Activated T-helper 1 cell treated with anti-CD3 and anti-CD28 coated beads, Interleukin-12 subunit alpha, Interleukin-12 subunit beta, Interleukin-2, Interleukin-4 antibody, amounts not matched to agents 30 ng/mL and 10 ng/mL and 1 ng/mL, durations not matched to agents 14 hours and 24 hours and 36 hours (primary cell): ENCODE measurements at regions of chr9 and their contacts with region 1.

Region 1: GRCh38 chr9:7536310-7536939 is 263.2 kb downstream of the DMAC1 start:
- DNase-seq: peak; percentile 31
- H3K4me3 Mint-ChIP-seq: no peak overlapping the region
- H3K27ac Mint-ChIP-seq: no peak overlapping the region
- H3K4me1 Mint-ChIP-seq: peaks cover 45% of the 10 kb centered on the region
- H3K27me3 Mint-ChIP-seq: peaks cover 4% of the 10 kb centered on the region

Region 2: DNA sequence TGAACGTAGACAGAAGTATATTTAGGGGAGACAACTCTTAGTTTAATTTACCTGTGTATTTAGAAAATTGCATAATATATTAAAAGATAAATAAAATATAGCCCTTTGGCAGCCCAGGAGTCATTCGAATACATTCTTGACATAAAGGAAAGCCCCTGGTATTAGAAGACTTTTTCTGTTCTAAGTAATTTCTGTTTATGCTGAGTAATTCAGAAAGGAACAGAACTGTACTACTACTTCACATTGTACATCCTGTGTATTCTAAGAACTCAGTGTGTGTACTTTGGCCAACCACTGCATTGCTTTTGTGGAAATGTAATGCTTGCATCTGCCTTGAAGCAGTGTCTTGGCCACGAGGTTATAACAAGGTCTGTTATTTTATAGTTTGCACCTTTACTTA is 642.3 kb before region 1 on chr9:
- intact Hi-C with region 1: loop called (anchors 1 kb)
- DNase-seq: no peak
- H3K4me3 Mint-ChIP-seq: peak overlapping the region; percentile 32
- H3K27ac Mint-ChIP-seq: peak overlapping the region; percentile 61
- H3K4me1 Mint-ChIP-seq: peaks cover 33% of the 10 kb centered on the region
- H3K27me3 Mint-ChIP-seq: no peaks in the 10 kb centered on the region

Region 3: DNA sequence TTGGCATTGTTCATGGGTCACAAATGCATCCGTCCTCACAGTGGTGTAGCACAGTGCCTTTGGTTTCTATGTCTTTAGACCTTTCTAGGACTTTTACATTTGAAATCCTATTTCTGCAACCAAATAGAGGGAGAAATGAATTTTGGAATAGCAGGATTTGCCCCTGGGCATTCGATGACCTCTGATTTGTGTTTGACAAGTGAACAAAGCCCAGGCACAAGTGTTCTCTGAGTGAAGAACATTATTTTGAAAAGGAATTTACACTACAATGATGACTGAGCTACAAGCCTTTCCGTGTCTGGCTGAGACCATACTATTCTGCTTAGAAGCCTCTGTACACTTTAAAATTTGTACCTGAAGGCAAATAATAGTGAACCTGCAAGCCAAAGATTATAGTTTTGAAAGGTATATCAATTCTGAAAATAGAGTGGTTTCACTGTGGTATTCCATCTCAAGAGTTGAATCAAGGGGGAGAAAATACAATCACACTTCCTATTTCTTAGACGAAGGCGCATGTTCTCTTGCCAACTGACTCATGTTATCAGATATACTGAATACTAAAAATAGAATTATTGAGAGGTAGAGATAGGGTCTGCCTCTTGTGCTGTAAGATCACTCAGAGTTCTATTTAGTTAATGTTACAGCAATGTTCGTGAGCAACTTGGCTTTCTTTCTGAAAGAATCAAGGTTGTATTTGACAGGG is 481.1 kb before region 1 on chr9:
- intact Hi-C with region 1: loop called (anchors 1 kb)
- DNase-seq: no peak
- H3K4me3 Mint-ChIP-seq: no peak overlapping the region
- H3K27ac Mint-ChIP-seq: no peak overlapping the region
- H3K4me1 Mint-ChIP-seq: no peaks in the 10 kb centered on the region
- H3K27me3 Mint-ChIP-seq: no peaks in the 10 kb centered on the region

Region 4: GRCh38 chr9:7234143-7234542 is 302.3 kb before region 1 on chr9:
- intact Hi-C with region 1: loop called (anchors 5 kb)
- DNase-seq: peak; percentile 10
- H3K4me3 Mint-ChIP-seq: no peak overlapping the region
- H3K27ac Mint-ChIP-seq: no peak overlapping the region
- H3K4me1 Mint-ChIP-seq: peaks cover 16% of the 10 kb centered on the region
- H3K27me3 Mint-ChIP-seq: peaks cover 12% of the 10 kb centered on the region

Region 5: GRCh38 chr9:7405924-7406604 is 130.4 kb before region 1 on chr9:
- intact Hi-C with region 1: loop called (anchors 1 kb)
- DNase-seq: no peak
- H3K4me3 Mint-ChIP-seq: no peak overlapping the region
- H3K27ac Mint-ChIP-seq: peak overlapping the region; percentile 4
- H3K4me1 Mint-ChIP-seq: peaks cover 12% of the 10 kb centered on the region
- H3K27me3 Mint-ChIP-seq: peaks cover 11% of the 10 kb centered on the region

Region 6: DNA sequence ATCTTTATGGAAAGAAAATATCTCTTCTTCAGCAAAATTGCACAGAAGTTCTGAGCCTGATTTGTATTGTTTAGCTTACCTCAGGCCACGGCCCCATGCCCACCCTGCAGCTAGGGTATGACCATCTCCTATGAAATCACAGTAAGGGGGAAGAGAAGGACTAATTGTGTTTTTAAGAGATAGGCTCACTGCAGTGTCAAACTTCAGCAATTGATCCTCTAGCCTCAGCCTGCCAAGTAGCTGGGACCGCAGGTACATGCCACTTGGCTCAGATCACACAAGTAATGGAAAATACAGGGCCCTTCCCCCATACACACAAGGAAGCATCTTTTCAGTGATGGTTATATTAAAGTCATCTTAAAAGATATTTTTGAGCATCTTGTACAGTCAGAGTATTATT is 203.2 kb after region 1 on chr9:
- intact Hi-C with region 1: no loop called
- DNase-seq: no peak
- H3K4me3 Mint-ChIP-seq: no peak overlapping the region
- H3K27ac Mint-ChIP-seq: no peak overlapping the region
- H3K4me1 Mint-ChIP-seq: no peaks in the 10 kb centered on the region
- H3K27me3 Mint-ChIP-seq: peaks cover 7% of the 10 kb centered on the region

Region 7: GRCh38 chr9:7976167-7976755 is 439.8 kb after region 1 on chr9:
- intact Hi-C with region 1: loop called (anchors 2 kb)
- DNase-seq: peak; percentile 68
- H3K4me3 Mint-ChIP-seq: peak overlapping the region; percentile 15
- H3K27ac Mint-ChIP-seq: peak overlapping the region; percentile 73
- H3K4me1 Mint-ChIP-seq: peaks cover 63% of the 10 kb centered on the region
- H3K27me3 Mint-ChIP-seq: no peaks in the 10 kb centered on the region

Region 8: GRCh38 chr9:8085986-8086385 is 549.6 kb after region 1 on chr9:
- intact Hi-C with region 1: no loop called
- DNase-seq: no peak
- H3K4me3 Mint-ChIP-seq: no peak overlapping the region
- H3K27ac Mint-ChIP-seq: no peak overlapping the region
- H3K4me1 Mint-ChIP-seq: no peaks in the 10 kb centered on the region
- H3K27me3 Mint-ChIP-seq: peaks cover 6% of the 10 kb centered on the region

Region 9: GRCh38 chr9:8188720-8189407 is 652.4 kb after region 1 on chr9:
- intact Hi-C with region 1: no loop called
- DNase-seq: no peak
- H3K4me3 Mint-ChIP-seq: no peak overlapping the region
- H3K27ac Mint-ChIP-seq: no peak overlapping the region
- H3K4me1 Mint-ChIP-seq: no peaks in the 10 kb centered on the region
- H3K27me3 Mint-ChIP-seq: no peaks in the 10 kb centered on the region